ENCODE measurements at regions of chr22 and their contacts with region 1.

Region 1: DNA sequence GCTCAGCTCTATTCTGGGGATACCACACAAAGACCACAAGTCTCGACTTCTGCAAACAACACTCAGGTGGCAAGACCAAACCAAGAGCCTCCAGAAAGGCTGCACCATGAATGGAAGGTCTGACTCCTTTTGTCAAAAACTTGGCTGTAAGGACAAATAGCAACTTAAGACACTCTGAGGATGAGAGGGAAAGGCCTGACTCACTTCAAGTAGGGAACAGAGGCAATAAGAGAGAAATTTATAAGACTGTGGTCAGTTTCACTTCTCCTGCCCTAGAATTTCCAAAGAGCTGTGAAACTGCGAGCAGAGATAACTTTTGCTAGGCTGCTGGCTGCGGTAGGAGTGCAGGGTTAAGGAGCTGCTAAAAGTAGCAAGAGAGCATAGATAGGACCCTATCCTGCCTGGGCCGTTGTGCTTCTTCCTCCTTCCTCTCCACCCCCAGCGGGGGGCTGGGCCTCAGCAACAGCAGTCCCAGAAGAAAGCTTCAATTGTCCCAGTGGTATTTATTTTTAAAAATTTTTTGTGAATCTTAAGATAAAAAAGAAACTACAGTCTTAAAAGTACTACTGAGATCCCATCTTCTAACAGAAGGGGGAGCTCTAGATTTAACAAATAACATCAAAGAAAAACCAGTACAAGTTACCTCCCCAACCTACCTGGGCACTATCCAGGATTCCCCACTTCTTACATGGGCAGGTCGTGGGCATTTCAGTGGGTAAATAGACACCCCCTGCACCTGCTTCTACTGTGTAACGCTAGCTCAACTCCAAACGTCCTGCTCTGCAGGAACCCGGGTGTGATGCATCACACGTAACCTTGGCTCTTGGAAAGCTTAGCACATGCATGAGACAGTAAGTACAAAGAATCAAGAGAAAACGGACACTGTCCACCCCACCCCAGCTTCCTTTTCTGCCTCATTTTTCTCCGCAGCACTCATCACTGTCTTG is 66.4 kb downstream of the SGSM3 start:
- DNase-seq: peak; percentile 54
- ATAC-seq: peak; percentile 71
- H3K4me3 Mint-ChIP-seq: peak overlapping the region; percentile 10
- H3K27ac Mint-ChIP-seq: peak overlapping the region; percentile 81
- H3K4me1 Mint-ChIP-seq: peaks cover 48% of the 10 kb centered on the region
- H3K27me3 Mint-ChIP-seq: no peaks in the 10 kb centered on the region

Region 2: GRCh38 chr22:40449676-40450035 is 12.9 kb after region 1 on chr22:
- CTCF ChIA-PET with region 1: interaction called, 21 read pairs
- DNase-seq: no peak
- ATAC-seq: no peak
- H3K4me3 Mint-ChIP-seq: no peak overlapping the region
- H3K27ac Mint-ChIP-seq: no peak overlapping the region
- H3K4me1 Mint-ChIP-seq: peaks cover 32% of the 10 kb centered on the region
- H3K27me3 Mint-ChIP-seq: no peaks in the 10 kb centered on the region

Region 3: DNA sequence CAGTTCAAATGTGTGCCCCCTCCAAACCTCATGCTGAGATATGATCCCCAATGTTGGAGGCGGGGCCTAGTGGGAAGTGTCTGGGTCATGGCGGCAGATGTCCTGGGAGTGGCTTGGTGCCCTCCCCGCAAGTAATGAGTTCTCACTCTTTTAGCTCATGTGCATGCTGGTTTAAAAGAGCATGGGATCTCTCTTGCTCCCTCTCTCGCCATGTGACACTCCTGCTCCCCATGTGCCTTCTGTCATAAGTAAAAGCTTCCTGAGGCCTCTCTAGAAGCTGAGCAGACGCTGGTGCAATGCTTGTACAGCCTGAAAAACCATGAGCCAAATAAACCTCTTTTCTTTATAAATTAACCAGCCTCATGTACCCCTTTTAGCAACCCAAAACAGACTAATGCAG is 32.4 kb after region 1 on chr22:
- CTCF ChIA-PET with region 1: interaction called, 28 read pairs
- DNase-seq: no peak
- ATAC-seq: no peak
- H3K4me3 Mint-ChIP-seq: no peak overlapping the region
- H3K27ac Mint-ChIP-seq: no peak overlapping the region
- H3K4me1 Mint-ChIP-seq: peaks cover 18% of the 10 kb centered on the region
- H3K27me3 Mint-ChIP-seq: no peaks in the 10 kb centered on the region

Region 4: GRCh38 chr22:40487663-40488249 is 51.0 kb after region 1 on chr22:
- CTCF ChIA-PET with region 1: interaction called, 91 read pairs
- DNase-seq: no peak
- ATAC-seq: peak; percentile 67
- H3K4me3 Mint-ChIP-seq: no peak overlapping the region
- H3K27ac Mint-ChIP-seq: no peak overlapping the region
- H3K4me1 Mint-ChIP-seq: peaks cover 15% of the 10 kb centered on the region
- H3K27me3 Mint-ChIP-seq: no peaks in the 10 kb centered on the region

Region 5: DNA sequence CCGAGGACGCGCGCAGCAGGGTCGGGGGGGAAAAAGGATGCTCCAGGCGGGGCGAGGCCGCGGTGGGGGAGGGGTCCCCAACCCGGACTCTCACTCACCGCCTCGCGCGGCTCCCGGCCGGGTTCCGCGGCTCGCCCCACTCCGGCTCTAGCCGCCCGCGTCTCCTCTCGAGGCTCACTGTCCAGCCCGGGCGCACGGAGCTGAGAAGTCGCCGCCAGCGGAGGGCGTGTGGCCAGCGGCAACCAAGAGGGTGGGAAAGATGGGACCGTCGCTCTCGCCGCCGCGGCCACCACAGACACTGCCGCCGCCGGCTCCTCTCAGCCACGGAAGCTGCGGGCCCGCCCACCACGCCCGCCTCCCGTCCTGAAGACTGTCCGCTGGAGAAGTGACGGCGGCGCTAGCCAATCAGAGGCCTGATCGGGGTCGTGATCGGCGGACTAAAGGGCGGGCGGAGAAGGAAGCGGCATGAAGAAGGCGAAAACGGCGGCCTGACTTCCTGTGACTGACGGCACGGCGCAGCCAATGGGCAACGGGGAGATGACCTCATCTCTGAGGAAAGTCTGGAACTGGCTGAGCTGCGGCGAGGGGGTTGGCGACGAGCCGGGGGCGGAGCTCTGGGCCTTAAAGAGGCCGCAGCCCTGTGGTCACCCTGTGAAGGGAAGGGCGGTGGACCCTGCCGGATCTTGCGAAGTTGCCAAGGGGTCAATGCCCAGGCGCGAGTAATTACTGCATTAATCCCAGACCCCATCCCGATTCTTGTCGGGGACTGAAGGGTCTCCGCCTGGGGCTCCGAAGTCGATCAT is 199.8 kb after region 1 on chr22 and contains the start of gene MRTFA:
- CTCF ChIA-PET with region 1: interaction called, 16 read pairs
- DNase-seq: peak; percentile 100
- ATAC-seq: peak; percentile 96
- H3K4me3 Mint-ChIP-seq: peak within 1 kb of the TSS; percentile 94
- H3K27ac Mint-ChIP-seq: peak within 1 kb of the TSS; percentile 98
- H3K4me1 Mint-ChIP-seq: peaks cover 26% of the 10 kb centered on the region
- H3K27me3 Mint-ChIP-seq: no peaks in the 10 kb centered on the region
- total RNA-seq, gene MRTFA: 59.4 to 74.0 TPM

Region 6: DNA sequence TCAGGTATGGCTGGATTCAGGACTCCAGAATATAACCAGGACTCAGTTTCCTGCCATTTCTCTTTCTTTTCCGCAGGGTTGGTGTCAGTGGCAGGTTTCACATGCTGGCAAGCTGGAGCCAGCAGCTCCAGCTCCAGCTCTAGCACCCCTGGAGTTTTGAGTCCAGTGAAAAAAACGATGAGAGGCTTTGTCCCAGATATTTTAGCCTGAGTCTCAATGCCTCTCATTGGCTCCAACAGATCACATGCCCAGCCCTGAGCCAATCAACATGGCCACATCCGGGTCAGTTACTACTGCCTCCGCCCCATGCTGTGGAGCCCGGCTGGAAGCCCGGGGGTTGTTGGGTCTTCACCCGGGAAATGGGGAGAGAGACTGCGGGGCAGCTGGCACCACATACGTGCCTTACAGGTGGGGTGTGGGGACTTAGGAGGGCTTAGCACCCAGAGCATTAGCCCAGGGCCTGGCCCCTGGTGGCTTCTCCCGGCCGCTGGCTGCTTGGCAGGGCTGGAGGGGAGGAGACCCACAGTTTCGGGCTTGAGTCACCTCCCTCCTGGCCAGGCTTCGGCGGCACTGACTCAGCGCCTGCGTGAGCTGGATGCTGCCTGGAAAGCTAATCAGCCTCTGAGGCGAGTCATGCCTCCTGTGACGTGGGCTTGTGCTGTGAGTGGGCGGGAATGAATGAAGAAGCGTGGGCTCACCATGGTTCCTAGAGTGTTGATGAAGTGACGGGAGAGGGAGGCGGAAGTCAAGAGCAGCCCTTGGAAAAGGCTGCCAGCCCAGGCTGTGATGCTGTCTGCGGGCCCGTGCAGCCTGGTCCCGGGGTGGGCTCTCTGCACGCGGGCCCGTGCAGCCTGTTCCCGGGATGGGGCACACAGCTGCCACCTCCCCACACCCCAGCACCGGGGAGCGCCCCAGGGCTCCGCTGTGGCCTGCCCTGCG is 215.1 kb after region 1 on chr22:
- CTCF ChIA-PET with region 1: interaction called, 98 read pairs
- DNase-seq: peak; percentile 91
- ATAC-seq: peak; percentile 96
- H3K4me3 Mint-ChIP-seq: peak overlapping the region; percentile 59
- H3K27ac Mint-ChIP-seq: peak overlapping the region; percentile 68
- H3K4me1 Mint-ChIP-seq: peaks cover 26% of the 10 kb centered on the region
- H3K27me3 Mint-ChIP-seq: no peaks in the 10 kb centered on the region

Region 7: GRCh38 chr22:40709752-40710413 is 273.1 kb after region 1 on chr22:
- CTCF ChIA-PET with region 1: no interaction called
- DNase-seq: no peak
- ATAC-seq: no peak
- H3K4me3 Mint-ChIP-seq: no peak overlapping the region
- H3K27ac Mint-ChIP-seq: peak overlapping the region; percentile 60
- H3K4me1 Mint-ChIP-seq: peaks cover 20% of the 10 kb centered on the region
- H3K27me3 Mint-ChIP-seq: peaks cover 9% of the 10 kb centered on the region